Heart left ventricle (tissue), 16 donors: ENCODE measurements at regions of chr2 and their contacts with region 1.

Region 1: GRCh38 chr2:216519154-216519762 is 20.6 kb downstream of the RPL37A start:
- DNase-seq: peak in 4 of 5 donors; percentile 50 to 78 (median 65)
- ATAC-seq: peak; percentile 72 to 86 (median 82)
- H3K4me3 ChIP-seq: no peak overlapping the region
- H3K27ac ChIP-seq: peak overlapping the region in 1 of 12 donors; percentile 23
- H3K4me1 ChIP-seq: peaks cover 0 to 14% (median 4%) of the 10 kb centered on the region in 12 donors
- H3K27me3 ChIP-seq: no peaks in the 10 kb centered on the region
- CTCF ChIP-seq: peak; percentile 67 to 90 (median 80)
- POLR2A ChIP-seq: no peak

Region 2: DNA sequence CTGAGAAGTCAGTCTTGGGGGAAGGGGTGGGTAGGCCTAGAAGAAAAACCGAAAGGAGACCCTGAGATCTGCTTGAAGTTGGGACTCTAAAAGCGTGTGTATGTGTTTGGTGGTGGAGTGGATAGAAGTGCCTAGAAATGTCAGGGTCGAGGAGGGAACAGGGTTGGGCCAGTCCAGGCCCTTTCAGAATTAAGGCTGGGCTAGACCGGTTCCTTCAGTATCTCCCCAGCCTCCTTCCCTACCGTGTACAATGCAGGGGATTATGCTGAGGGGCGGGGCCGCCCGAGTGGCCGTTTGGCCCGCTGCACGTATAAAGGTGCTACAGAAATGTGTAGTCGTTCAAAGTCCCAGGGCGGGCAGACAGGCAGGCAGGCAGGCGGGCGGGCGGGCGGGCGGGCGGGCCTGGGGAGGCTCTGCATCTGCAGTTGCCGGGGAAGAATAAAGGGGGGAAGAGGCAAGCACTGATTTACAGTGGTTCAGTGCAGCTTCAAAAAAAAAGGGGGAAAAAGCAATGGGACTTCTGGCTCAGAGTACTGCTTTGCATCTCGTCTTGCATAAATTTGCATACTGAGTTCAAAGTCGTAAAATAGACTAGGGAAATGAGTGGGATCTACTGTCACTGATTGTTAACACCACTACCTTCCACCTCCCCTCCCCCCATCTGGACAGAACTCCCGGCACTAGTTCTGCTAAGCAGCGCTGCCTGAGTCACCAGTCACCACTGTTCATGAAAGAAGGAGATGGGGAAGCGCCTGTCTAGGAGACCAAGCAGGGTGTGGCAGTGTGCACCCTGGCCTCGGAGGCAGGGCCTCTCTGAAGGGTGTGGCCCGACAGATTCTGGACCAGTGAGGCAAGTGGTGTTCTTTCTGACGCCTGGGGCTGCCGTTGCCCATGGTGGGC is 117.5 kb after region 1 on chr2:
- intact Hi-C with region 1: no loop called
- DNase-seq: peak in 1 of 5 donors; percentile 43
- ATAC-seq: peak in 3 of 4 donors; percentile 47 to 61 (median 57)
- H3K4me3 ChIP-seq: peak overlapping the region in 9 of 12 donors; percentile 15 to 88 (median 67)
- H3K27ac ChIP-seq: peak overlapping the region in 7 of 12 donors; percentile 3 to 66 (median 46)
- H3K4me1 ChIP-seq: peaks cover 0 to 60% (median 27%) of the 10 kb centered on the region in 12 donors
- H3K27me3 ChIP-seq: peaks cover 0 to 28% (median 0%) of the 10 kb centered on the region in 9 donors
- CTCF ChIP-seq: no peak
- POLR2A ChIP-seq: no peak

Region 3: DNA sequence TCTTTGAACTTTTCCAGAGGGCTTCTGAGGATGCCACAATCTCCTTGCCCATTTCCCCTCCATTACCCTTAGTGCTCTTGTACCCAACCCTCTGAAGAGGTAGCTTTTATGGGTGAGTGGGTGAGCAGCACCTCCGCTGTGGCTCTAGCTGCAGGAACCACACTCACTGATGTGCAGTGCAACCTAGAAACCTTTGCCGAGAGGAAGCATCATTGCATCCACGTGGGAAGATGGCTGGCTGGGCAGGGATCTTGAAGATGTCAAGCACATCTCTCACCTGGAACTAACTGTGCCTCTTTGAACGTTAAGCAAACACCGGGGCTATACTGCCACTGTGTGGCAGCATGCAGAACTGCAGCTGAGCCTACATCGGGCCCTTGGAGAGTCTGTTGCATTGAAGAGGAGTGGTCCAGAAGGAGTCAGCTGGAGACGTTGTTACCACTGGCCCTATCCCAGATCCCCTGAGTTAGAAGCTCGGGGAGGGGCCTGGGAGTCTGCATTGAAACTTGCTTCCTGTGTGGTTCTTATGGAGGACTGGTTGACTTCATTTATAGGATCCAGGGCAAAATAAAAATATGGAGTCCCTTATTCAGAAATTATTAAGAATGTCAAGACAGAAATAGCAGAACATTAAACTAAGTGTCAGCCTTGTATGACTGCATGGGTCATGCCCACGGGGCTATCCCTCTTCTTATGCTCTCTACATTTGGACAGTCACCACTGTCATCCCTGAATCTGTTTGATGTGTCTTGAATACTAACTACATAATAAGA is 147.4 kb after region 1 on chr2:
- intact Hi-C with region 1: loop called (anchors 1 to 2 kb)
- DNase-seq: peak; percentile 57 to 83 (median 60)
- ATAC-seq: peak; percentile 48 to 73 (median 64)
- H3K4me3 ChIP-seq: no peak overlapping the region
- H3K27ac ChIP-seq: no peak overlapping the region
- H3K4me1 ChIP-seq: peaks cover 0 to 22% (median 14%) of the 10 kb centered on the region in 12 donors
- H3K27me3 ChIP-seq: no peaks in the 10 kb centered on the region
- CTCF ChIP-seq: peak in 11 of 12 donors; percentile 92 to 99 (median 98)
- POLR2A ChIP-seq: no peak

Region 4: DNA sequence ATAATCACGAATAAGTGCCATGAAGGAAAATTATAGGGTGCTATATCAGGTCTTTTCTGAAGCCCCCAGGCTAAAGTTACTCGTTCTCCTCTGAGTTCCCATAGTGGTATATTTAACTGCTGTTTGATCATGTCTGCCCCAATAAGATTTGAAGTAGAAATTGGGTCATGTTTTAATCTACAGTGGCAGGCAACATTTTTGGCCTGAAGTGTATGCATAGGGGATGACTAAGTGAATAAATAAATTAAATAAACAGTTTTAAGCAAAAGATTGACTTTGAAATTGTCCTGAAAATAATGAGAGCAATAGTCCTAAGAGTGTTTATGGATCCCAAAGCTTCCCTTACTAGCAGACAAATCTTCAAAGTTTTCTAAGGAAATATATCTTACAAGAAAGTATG is 982.6 kb after region 1 on chr2:
- intact Hi-C with region 1: loop called in 1 of 10 experiments (anchors 10 kb)
- DNase-seq: no peak
- ATAC-seq: no peak
- H3K4me3 ChIP-seq: no peak overlapping the region
- H3K27ac ChIP-seq: no peak overlapping the region
- H3K4me1 ChIP-seq: no peaks in the 10 kb centered on the region
- H3K27me3 ChIP-seq: no peaks in the 10 kb centered on the region
- CTCF ChIP-seq: no peak
- POLR2A ChIP-seq: no peak

Region 5: GRCh38 chr2:217510771-217511291 is 991.6 kb after region 1 on chr2:
- intact Hi-C with region 1: loop called in 6 of 10 experiments (anchors 5 to 10 kb)
- DNase-seq: peak in 4 of 5 donors; percentile 39 to 77 (median 62)
- ATAC-seq: peak; percentile 88 to 93 (median 91)
- H3K4me3 ChIP-seq: no peak overlapping the region
- H3K27ac ChIP-seq: peak overlapping the region in 2 of 12 donors; percentile 2 to 16
- H3K4me1 ChIP-seq: peaks cover 0 to 24% (median 5%) of the 10 kb centered on the region in 12 donors
- H3K27me3 ChIP-seq: no peaks in the 10 kb centered on the region
- CTCF ChIP-seq: peak; percentile 30 to 82 (median 72)
- POLR2A ChIP-seq: no peak

Region 6: DNA sequence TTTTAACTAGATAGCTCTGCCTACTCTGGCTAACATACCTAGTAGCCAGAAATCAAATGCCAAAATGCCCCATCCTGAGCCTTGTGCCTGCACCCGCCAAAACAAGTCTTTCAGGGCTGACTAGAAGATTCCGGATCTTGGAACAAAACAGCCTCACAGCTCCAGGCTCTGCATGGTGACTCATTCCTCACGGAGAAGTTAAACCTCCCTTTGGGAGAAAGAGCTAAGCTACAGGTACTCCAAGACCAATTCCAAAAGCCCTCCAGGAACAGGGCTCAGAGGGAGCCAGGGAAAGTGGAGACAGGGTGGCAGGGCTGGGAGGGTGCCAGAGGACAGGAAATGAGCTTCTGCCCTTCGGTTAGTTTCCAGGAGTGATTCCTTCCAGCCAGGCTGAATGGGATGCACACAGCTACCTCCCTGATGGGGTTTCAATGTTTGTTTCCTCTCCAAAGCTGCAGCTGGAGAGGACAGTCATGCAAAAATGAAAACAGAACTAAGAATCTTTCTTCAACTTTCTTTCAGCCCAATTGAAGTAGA is 1187.9 kb after region 1 on chr2:
- intact Hi-C with region 1: loop called in 4 of 10 experiments (anchors 5 to 10 kb)
- DNase-seq: no peak
- ATAC-seq: peak in 3 of 4 donors; percentile 47 to 65 (median 63)
- H3K4me3 ChIP-seq: no peak overlapping the region
- H3K27ac ChIP-seq: peak overlapping the region in 4 of 12 donors; percentile 11 to 53 (median 22)
- H3K4me1 ChIP-seq: peaks cover 0 to 17% (median 5%) of the 10 kb centered on the region in 12 donors
- H3K27me3 ChIP-seq: no peaks in the 10 kb centered on the region
- CTCF ChIP-seq: no peak
- POLR2A ChIP-seq: no peak

Region 7: GRCh38 chr2:217729421-217730053 is 1210.3 kb after region 1 on chr2:
- intact Hi-C with region 1: loop called in 1 of 10 experiments (anchors 10 kb)
- DNase-seq: peak in 3 of 5 donors; percentile 54 to 74 (median 56)
- ATAC-seq: peak; percentile 37 to 71 (median 62)
- H3K4me3 ChIP-seq: no peak overlapping the region
- H3K27ac ChIP-seq: peak overlapping the region in 6 of 12 donors; percentile 3 to 46 (median 10)
- H3K4me1 ChIP-seq: peaks cover 0 to 65% (median 27%) of the 10 kb centered on the region in 12 donors
- H3K27me3 ChIP-seq: no peaks in the 10 kb centered on the region
- CTCF ChIP-seq: no peak
- POLR2A ChIP-seq: no peak

Region 8: DNA sequence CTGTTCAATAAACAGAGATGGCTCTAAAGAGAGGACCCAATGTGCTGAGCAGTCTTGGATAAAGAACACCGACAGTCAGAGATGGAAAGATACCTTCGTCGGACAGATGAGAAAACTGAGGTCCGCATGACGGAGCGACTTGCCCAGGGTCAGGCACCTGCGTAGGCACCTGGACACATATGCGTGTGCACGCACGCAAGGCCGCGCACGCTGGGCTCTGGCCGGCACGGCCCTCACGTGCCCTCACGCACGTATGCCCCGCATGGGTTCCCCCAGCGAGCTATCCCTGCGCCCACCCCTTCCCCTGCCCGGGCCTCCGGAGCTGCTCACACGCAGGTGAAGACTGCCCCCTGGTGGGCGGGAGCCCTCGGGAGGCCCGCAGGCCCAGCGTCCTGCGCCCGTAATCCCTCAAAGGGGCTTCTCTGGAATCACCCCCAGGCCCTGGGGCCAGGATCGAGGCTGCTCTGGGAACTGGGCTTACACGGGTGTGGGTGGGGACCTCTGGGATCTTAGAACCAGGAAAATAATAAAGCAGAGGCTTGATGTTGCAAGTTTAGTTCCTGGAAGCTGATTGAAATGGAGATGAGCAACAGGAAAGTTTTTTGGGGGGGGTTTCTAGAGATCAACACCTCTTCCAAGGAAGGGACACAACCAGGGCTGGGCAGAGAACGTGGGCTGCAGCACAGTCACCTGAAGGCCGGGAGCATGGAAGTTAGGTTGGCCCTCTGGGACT is 1237.3 kb after region 1 on chr2:
- intact Hi-C with region 1: loop called in 3 of 10 experiments (anchors 5 to 10 kb)
- DNase-seq: peak; percentile 65 to 84 (median 74)
- ATAC-seq: peak; percentile 76 to 91 (median 86)
- H3K4me3 ChIP-seq: peak overlapping the region in 8 of 12 donors; percentile 11 to 39 (median 31)
- H3K27ac ChIP-seq: peak overlapping the region in 1 of 12 donors; percentile 26
- H3K4me1 ChIP-seq: peaks cover 0 to 24% (median 7%) of the 10 kb centered on the region in 12 donors
- H3K27me3 ChIP-seq: peaks cover 0 to 6% (median 0%) of the 10 kb centered on the region in 9 donors
- CTCF ChIP-seq: peak; percentile 87 to 98 (median 94)
- POLR2A ChIP-seq: no peak